Right lobe of liver (tissue), 6 donors: ENCODE measurements at regions of chr1 and their contacts with region 1.

Region 1: GRCh38 chr1:15328351-15329103 is 81.2 kb upstream of the EFHD2 start:
- DNase-seq: peak; percentile 67 to 81 (median 76)
- ATAC-seq: peak; percentile 81 to 94 (median 89)
- H3K4me3 ChIP-seq: no peak overlapping the region
- H3K27ac ChIP-seq: peak overlapping the region in 2 of 3 donors; percentile 15 to 49
- H3K4me1 ChIP-seq: peaks cover 0 to 13% (median 6%) of the 10 kb centered on the region in 4 donors
- H3K27me3 ChIP-seq: no peaks in the 10 kb centered on the region
- CTCF ChIP-seq: no peak
- POLR2A ChIP-seq: no peak

Region 2: GRCh38 chr1:15430787-15431570 is 102.5 kb after region 1 on chr1:
- intact Hi-C with region 1: loop called (anchors 5 kb)
- DNase-seq: peak; percentile 70 to 79 (median 71)
- ATAC-seq: peak; percentile 72 to 80 (median 78)
- H3K4me3 ChIP-seq: no peak overlapping the region
- H3K27ac ChIP-seq: no peak overlapping the region
- H3K4me1 ChIP-seq: peaks cover 0 to 3% (median 0%) of the 10 kb centered on the region in 4 donors
- H3K27me3 ChIP-seq: no peaks in the 10 kb centered on the region
- CTCF ChIP-seq: peak; percentile 88 to 94 (median 92)
- POLR2A ChIP-seq: no peak